Right lobe of liver (tissue), 6 donors: ENCODE measurements at regions of chr3 and their contacts with region 1.

Region 1: DNA sequence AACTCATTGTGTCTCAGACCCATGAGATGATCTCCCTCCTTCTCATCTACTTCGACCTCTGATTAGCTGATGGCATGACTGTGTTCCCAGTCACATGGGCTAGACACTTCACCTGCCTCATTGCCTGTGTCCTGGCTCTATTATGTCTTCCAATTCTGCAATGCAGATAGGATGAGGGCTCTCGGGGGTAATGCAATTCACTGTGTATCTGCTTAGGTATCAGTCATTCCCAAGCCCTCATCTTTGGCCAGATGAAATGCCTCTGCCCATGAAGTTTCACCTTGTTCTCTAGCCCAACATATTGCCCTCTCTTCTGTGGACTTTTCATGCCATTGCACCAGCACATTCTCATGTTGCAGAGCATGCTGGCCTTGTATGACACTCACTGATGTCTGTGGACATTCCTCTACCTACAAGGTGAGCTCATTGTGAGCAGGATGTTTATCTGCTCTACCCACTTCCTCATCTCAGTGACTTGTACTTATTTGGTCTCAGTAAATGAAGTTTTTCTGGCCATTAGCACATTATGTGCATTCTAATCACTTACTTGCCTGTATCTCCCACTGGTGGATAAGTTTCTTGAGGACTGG is 32.3 kb downstream of the MOBP start:
- DNase-seq: no peak
- ATAC-seq: no peak
- H3K4me3 ChIP-seq: no peak overlapping the region
- H3K27ac ChIP-seq: no peak overlapping the region
- H3K4me1 ChIP-seq: peaks cover 0 to 4% (median 0%) of the 10 kb centered on the region in 4 donors
- H3K27me3 ChIP-seq: peaks cover 0 to 7% of the 10 kb centered on the region in 2 donors
- CTCF ChIP-seq: no peak
- POLR2A ChIP-seq: no peak

Region 2: DNA sequence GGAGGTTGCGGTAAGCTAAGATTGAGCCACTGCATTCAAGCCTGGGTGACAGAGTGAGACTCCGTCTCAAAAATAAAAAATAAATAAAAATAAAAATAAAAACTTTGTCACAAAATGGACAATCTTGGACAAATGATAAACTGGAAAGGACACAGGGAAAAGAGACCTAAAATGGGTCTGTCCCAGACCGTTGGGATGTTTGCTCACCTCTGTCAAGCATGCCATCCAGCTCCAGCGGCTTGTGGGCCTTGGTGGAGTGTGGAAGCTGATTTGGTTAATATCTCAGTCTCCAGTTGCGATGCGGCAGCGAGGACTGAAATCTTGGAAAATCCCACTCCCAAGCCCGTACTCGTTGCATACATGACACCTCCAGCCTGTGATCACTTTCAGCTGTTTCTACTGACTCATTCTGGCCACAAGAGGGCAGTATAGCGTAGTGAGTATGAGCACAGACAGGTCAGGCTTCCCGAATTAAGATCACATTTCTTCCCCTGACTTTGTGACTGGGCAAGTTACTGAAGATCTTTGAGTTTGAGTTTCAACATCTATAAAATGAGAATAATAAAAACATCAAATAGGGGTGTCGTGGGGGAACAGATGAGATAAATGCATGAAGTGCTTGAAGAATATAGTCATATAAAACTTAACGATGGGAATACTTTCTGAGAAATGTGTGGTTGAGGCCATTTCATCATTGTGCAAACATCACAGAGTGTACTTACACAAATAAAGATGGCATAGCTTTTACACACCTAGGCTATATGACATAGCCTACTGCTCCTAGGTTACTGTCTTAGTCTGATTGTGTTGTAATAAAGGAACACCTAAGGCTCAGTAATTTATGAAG is 51.9 kb before region 1 on chr3:
- intact Hi-C with region 1: loop called in 1 of 2 experiments (anchors 5 kb)
- DNase-seq: peak in 1 of 3 donors; percentile 71
- ATAC-seq: peak; percentile 97 to 100 (median 98)
- H3K4me3 ChIP-seq: no peak overlapping the region
- H3K27ac ChIP-seq: no peak overlapping the region
- H3K4me1 ChIP-seq: peaks cover 0 to 9% (median 0%) of the 10 kb centered on the region in 4 donors
- H3K27me3 ChIP-seq: no peaks in the 10 kb centered on the region
- CTCF ChIP-seq: peak; percentile 77 to 94 (median 89)
- POLR2A ChIP-seq: no peak

Region 3: GRCh38 chr3:39626198-39626597 is 126.5 kb after region 1 on chr3:
- intact Hi-C with region 1: no loop called
- DNase-seq: no peak
- ATAC-seq: no peak
- H3K4me3 ChIP-seq: no peak overlapping the region
- H3K27ac ChIP-seq: no peak overlapping the region
- H3K4me1 ChIP-seq: no peaks in the 10 kb centered on the region
- H3K27me3 ChIP-seq: no peaks in the 10 kb centered on the region
- CTCF ChIP-seq: no peak
- POLR2A ChIP-seq: no peak